Calu3 (cell line): ENCODE measurements at regions of chr1 and their contacts with region 1.

Region 1: GRCh38 chr1:169529068-169529696 is 43.4 kb upstream of the SLC19A2 start:
- DNase-seq: peak; percentile 89
- H3K4me3 Mint-ChIP-seq: peak overlapping the region; percentile 67
- H3K27ac Mint-ChIP-seq: peak overlapping the region; percentile 98
- H3K4me1 Mint-ChIP-seq: peaks cover 90% of the 10 kb centered on the region
- H3K27me3 Mint-ChIP-seq: no peaks in the 10 kb centered on the region
- CTCF ChIP-seq: no peak

Region 2: GRCh38 chr1:169367486-169368405 is 161.4 kb before region 1 on chr1 and contains the starts of genes BLZF1 and NME7:
- CTCF ChIA-PET with region 1: no interaction called
- intact Hi-C with region 1: loop called (anchors 5 kb)
- DNase-seq: peak; percentile 98
- H3K4me3 Mint-ChIP-seq: no peak within 1 kb of the TSS
- H3K27ac Mint-ChIP-seq: no peak within 1 kb of the TSS
- H3K4me1 Mint-ChIP-seq: peaks cover 20% of the 10 kb centered on the region
- H3K27me3 Mint-ChIP-seq: no peaks in the 10 kb centered on the region
- CTCF ChIP-seq: no peak
- total RNA-seq, gene BLZF1: 45.7 and 55.5 TPM in 2 replicates
- total RNA-seq, gene NME7: 25.2 and 33.2 TPM in 2 replicates

Region 3: GRCh38 chr1:169390303-169390702 is 138.9 kb before region 1 on chr1:
- CTCF ChIA-PET with region 1: no interaction called
- intact Hi-C with region 1: loop called (anchors 5 kb)
- DNase-seq: no peak
- H3K4me3 Mint-ChIP-seq: no peak overlapping the region
- H3K27ac Mint-ChIP-seq: no peak overlapping the region
- H3K4me1 Mint-ChIP-seq: peaks cover 10% of the 10 kb centered on the region
- H3K27me3 Mint-ChIP-seq: no peaks in the 10 kb centered on the region
- CTCF ChIP-seq: no peak

Region 4: GRCh38 chr1:169466259-169467230 is 62.6 kb before region 1 on chr1:
- CTCF ChIA-PET with region 1: no interaction called
- intact Hi-C with region 1: loop called (anchors 1 kb)
- DNase-seq: peak; percentile 56
- H3K4me3 Mint-ChIP-seq: no peak overlapping the region
- H3K27ac Mint-ChIP-seq: no peak overlapping the region
- H3K4me1 Mint-ChIP-seq: peaks cover 2% of the 10 kb centered on the region
- H3K27me3 Mint-ChIP-seq: no peaks in the 10 kb centered on the region
- CTCF ChIP-seq: peak; percentile 59

Region 5: DNA sequence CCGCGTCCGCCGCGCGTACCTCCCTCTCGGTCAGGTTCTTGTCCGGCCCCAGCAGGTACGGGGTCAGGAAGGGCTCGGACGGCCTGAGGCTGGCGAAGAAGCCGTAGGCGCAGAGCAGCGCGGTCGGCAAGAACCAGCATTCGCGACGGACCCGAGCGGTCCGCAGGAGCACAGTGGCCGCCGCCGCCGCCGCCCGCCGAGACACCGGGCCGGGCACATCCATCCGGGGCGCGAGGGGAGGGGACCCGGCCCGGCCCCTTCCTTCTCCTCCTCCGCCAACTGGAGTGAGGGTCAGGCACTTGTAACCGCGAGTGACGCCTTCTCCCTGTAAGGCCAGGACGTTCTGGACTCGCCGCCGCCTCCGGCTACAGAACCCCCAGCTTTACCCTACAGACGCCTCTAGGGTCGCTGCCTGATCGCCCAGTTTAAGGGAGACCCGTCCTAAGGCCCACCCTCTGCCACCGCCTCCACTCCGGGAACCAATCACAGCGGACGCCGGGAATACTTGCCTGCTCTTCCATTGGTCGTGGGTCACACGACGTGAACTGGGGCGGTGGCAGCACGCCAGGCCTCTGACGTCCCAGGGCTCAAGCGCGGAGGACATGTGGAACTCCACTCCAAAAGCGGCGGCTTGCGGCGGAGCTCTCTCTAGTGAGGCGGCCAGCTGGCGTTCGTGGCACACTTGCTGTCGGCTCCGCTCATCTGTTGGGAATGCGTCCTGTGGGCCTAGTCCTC is 43.5 kb before region 1 on chr1 and contains the start of gene SLC19A2:
- CTCF ChIA-PET with region 1: interaction called, 3 read pairs
- intact Hi-C with region 1: loop called (anchors 5 kb)
- DNase-seq: peak; percentile 99
- H3K4me3 Mint-ChIP-seq: peak within 1 kb of the TSS; percentile 87
- H3K27ac Mint-ChIP-seq: peak within 1 kb of the TSS; percentile 99
- H3K4me1 Mint-ChIP-seq: peaks cover 62% of the 10 kb centered on the region
- H3K27me3 Mint-ChIP-seq: no peaks in the 10 kb centered on the region
- CTCF ChIP-seq: peak; percentile 49
- total RNA-seq, gene SLC19A2: 22.0 and 24.2 TPM in 2 replicates

Region 6: DNA sequence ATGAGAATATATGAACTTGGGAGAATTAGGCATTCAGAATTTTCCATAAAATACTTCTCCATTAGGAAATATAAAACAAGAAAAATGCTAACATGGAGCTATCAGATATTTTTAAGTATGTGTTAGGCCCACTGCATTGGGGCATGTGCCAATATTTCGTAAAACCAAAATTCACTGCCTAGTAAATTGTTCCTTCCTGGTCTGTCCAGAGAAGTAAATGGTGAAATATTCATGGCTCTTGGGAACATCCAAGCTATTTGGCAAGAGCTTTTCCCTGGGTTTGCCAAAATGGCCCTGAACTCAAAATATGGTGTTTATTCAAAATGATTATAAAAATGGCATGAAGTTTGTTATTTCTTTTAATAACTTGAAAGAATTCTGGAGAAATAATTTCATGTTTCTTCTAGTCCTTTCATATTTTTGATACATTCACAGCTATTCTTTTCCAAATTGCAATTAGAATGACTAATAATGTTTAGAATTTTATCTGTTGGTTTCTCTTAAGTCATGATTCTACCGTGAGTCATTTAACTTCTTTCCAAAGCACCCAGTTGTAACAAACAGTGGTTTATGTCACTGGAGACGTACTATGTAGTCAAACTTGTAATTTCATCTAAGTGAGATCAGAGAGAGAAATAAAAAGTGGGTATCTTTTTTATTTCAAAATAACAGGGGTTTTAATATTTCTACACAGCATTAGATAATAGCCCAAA is 17.7 kb before region 1 on chr1:
- CTCF ChIA-PET with region 1: interaction called, 13 read pairs
- intact Hi-C with region 1: no loop called
- DNase-seq: no peak
- H3K4me3 Mint-ChIP-seq: no peak overlapping the region
- H3K27ac Mint-ChIP-seq: peak overlapping the region; percentile 65
- H3K4me1 Mint-ChIP-seq: peaks cover 89% of the 10 kb centered on the region
- H3K27me3 Mint-ChIP-seq: no peaks in the 10 kb centered on the region
- CTCF ChIP-seq: no peak